CD4-positive, alpha-beta T cell (primary cell): ENCODE measurements at regions of chr1 and their contacts with region 1.

Region 1: DNA sequence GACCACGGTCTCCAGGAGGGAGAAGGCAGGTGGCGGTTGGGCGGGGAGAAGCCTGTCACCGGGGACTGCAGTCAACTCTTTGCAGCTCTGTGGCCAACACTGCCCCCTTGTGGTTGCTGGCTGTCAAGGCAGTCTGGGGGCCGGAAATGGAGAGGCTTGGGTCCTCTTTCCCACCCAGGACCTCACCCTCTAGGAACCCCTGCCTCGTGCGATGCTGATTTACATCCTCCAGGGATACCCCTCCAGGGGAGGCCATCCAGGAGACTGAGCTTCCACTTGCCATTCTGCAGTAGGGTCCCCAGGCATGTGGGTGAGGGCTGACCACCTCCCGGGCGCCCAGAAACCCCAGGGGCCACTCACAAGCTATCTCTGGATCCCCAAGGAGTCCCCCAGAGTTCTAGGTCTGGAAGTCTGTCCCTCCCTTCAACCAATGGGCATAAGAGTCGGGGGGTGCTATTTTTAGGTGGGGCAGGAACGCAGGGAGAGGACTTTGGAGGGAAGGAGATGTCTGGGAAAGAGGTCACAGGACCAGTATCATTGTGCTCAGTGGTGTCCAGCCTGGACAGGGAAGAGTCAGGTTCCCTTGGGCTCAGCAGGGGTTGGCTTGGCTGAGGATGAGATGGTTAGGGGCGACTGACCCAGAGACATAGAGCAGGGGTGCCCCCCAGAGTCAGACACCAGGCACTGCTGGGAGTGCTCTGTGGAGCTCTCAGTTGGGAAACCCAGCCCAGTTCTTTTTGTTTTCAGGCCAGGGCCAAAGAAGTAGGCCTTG is 7.1 kb upstream of the GPR61 start:
- DNase-seq: peak; percentile 83 to 95 (median 92)
- ATAC-seq: peak; percentile 92
- H3K4me3 ChIP-seq: peak overlapping the region; percentile 37
- H3K4me3 Mint-ChIP-seq: peak overlapping the region; percentile 84
- H3K27ac ChIP-seq: no peak overlapping the region
- H3K27ac Mint-ChIP-seq: peak overlapping the region; percentile 29
- H3K4me1 ChIP-seq: peaks cover 35% of the 10 kb centered on the region
- H3K4me1 Mint-ChIP-seq: peaks cover 35% of the 10 kb centered on the region
- H3K27me3 ChIP-seq: no peaks in the 10 kb centered on the region
- H3K27me3 Mint-ChIP-seq: no peaks in the 10 kb centered on the region
- CTCF ChIP-seq: peak; percentile 78

Region 2: GRCh38 chr1:109263597-109264398 is 268.8 kb before region 1 on chr1:
- CTCF ChIA-PET with region 1: interaction called, 3 read pairs
- POLR2A ChIA-PET with region 1: no interaction called
- intact Hi-C with region 1: loop called (anchors 1 kb)
- DNase-seq: peak; percentile 62 to 87 (median 71)
- ATAC-seq: peak; percentile 97
- H3K4me3 ChIP-seq: no peak overlapping the region
- H3K4me3 Mint-ChIP-seq: no peak overlapping the region
- H3K27ac ChIP-seq: no peak overlapping the region
- H3K27ac Mint-ChIP-seq: no peak overlapping the region
- H3K4me1 ChIP-seq: peaks cover 6% of the 10 kb centered on the region
- H3K4me1 Mint-ChIP-seq: no peaks in the 10 kb centered on the region
- H3K27me3 ChIP-seq: no peaks in the 10 kb centered on the region
- H3K27me3 Mint-ChIP-seq: no peaks in the 10 kb centered on the region
- CTCF ChIP-seq: peak; percentile 83

Region 3: DNA sequence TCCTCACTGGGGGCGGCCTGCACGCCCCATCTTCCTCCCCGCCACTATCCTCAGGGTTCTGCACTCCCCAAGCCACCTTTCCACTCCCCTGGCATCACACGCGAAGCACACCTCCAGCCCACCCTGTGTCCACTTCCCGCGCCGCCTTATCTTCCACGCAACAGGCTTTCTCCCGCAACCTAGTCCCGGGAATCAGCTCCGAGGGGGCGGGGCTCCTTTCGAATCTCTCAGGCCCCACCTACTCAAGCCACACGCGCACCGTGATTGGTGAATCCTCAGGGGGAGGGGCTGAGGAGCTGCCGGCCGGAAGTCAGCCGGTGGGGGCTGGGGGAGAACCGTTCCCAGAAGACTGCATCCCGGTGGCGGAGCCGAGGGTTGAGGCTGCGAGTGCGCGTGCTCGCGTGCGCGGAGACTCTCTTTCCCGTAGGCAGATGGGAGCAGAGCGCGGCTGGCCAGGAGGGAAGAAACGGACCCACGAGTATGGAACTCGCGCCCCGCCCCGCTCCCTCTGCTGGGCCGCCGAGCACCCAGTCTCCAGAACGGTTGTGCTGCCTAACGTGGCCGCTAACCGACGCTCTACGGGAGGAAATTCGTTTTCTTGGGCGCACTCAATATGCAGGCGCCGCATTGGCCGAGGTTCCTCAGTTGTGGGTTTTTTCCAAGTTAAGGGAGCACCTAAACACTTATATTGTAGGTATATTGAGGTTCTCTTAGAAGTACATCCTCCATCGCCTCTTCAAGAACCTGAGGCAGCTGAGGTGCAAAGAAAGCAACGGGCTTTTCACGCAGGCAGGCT is 249.4 kb before region 1 on chr1 and contains the start of gene PSRC1:
- CTCF ChIA-PET with region 1: interaction called, 26 read pairs
- POLR2A ChIA-PET with region 1: interaction called, 5 read pairs
- intact Hi-C with region 1: no loop called
- DNase-seq: peak; percentile 81 to 94 (median 85)
- ATAC-seq: peak; percentile 93
- H3K4me3 ChIP-seq: peak within 1 kb of the TSS; percentile 70
- H3K4me3 Mint-ChIP-seq: peak within 1 kb of the TSS; percentile 94
- H3K27ac ChIP-seq: peak within 1 kb of the TSS; percentile 31 to 59
- H3K27ac Mint-ChIP-seq: peak within 1 kb of the TSS; percentile 78
- H3K4me1 ChIP-seq: peaks cover 27% of the 10 kb centered on the region
- H3K4me1 Mint-ChIP-seq: peaks cover 19% of the 10 kb centered on the region
- H3K27me3 ChIP-seq: no peaks in the 10 kb centered on the region
- H3K27me3 Mint-ChIP-seq: no peaks in the 10 kb centered on the region
- CTCF ChIP-seq: peak; percentile 71
- total RNA-seq, gene PSRC1: 0.22 to 0.91 TPM

Region 4: DNA sequence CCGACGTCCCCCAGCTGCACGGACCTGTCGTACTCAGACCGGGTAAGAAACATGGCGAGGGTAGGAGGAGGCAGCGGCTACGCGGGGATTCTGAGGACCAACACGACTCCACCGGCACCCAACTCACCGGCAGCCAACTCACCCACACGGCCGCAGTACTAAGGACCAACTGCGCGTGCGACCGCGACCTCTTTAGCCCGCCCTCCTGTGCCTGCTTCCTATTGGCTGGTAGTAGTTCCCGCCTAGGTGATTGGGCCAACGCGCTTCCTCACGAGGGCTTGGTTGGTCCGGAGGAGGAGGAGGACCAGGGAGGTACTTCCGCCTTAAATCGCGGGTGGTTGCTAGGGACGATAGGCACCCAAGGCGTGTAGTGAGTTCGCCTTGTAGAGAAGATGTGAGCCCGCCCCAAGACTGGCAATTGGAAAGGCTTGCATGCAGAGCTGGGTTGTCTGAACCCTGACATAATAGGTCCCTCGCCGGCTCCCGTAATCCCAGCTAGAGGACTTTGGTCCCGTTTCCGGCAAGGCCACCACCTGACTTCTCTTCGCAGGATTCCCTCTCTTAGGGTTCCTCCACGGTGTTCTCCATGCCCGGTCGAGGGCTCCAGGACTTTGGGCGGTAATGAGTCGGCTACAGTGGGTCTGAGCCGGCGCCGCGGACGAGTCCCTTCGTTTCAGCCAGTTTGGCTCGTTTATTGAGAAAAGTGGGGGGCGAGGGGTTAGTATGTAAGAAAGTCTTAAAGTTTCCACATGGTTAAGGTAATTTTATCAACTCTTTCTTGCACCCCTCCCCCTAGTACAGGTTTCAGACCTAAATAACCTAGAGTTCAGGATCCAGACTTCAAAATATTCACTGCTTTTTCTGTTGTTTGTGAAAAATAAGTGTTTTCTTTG is 106.0 kb before region 1 on chr1 and contains the start of gene PSMA5:
- CTCF ChIA-PET with region 1: interaction called, 18 read pairs
- POLR2A ChIA-PET with region 1: interaction called, 17 read pairs
- intact Hi-C with region 1: loop called (anchors 2 to 5 kb)
- DNase-seq: peak; percentile 87 to 99 (median 92)
- ATAC-seq: peak; percentile 91
- H3K4me3 ChIP-seq: peak within 1 kb of the TSS; percentile 98
- H3K4me3 Mint-ChIP-seq: peak within 1 kb of the TSS; percentile 98
- H3K27ac ChIP-seq: peak within 1 kb of the TSS; percentile 91 to 95
- H3K27ac Mint-ChIP-seq: peak within 1 kb of the TSS; percentile 98
- H3K4me1 ChIP-seq: peaks cover 33% of the 10 kb centered on the region
- H3K4me1 Mint-ChIP-seq: peaks cover 52% of the 10 kb centered on the region
- H3K27me3 ChIP-seq: no peaks in the 10 kb centered on the region
- H3K27me3 Mint-ChIP-seq: no peaks in the 10 kb centered on the region
- CTCF ChIP-seq: no peak
- total RNA-seq, gene PSMA5: 29.8 to 33.8 TPM

Region 5: GRCh38 chr1:109499661-109500536 is 32.7 kb before region 1 on chr1:
- CTCF ChIA-PET with region 1: interaction called, 474 read pairs
- POLR2A ChIA-PET with region 1: interaction called, 318 read pairs
- intact Hi-C with region 1: loop called (anchors 1 kb)
- DNase-seq: peak; percentile 27 to 84 (median 67)
- ATAC-seq: peak; percentile 32
- H3K4me3 ChIP-seq: no peak overlapping the region
- H3K4me3 Mint-ChIP-seq: peak overlapping the region; percentile 54
- H3K27ac ChIP-seq: peak overlapping the region; percentile 90 to 94
- H3K27ac Mint-ChIP-seq: peak overlapping the region; percentile 95
- H3K4me1 ChIP-seq: peaks cover 99% of the 10 kb centered on the region
- H3K4me1 Mint-ChIP-seq: peaks cover 93% of the 10 kb centered on the region
- H3K27me3 ChIP-seq: no peaks in the 10 kb centered on the region
- H3K27me3 Mint-ChIP-seq: no peaks in the 10 kb centered on the region
- CTCF ChIP-seq: peak; percentile 58

Region 6: DNA sequence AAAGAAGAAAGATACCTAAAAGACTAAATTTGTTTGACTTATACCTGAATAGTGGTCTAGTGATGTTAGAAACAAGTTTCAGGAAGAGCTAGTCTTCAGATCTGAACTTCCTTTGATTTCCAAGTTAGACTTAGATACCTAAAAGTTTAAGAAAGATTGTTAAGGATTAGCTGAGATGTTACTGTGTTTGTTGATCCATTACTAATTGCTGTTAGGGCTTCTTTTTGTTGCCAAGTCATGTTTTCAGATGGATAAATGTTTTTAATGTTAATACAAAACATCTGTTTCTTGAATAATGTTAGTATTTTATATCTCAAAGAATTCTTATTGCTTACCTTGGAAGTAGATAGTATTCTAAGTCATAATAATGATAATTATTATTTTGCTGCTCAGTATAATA is 27.4 kb after region 1 on chr1:
- CTCF ChIA-PET with region 1: no interaction called
- POLR2A ChIA-PET with region 1: no interaction called
- intact Hi-C with region 1: no loop called
- DNase-seq: no peak
- ATAC-seq: no peak
- H3K4me3 ChIP-seq: no peak overlapping the region
- H3K4me3 Mint-ChIP-seq: peak overlapping the region; percentile 54
- H3K27ac ChIP-seq: no peak overlapping the region
- H3K27ac Mint-ChIP-seq: peak overlapping the region; percentile 8
- H3K4me1 ChIP-seq: peaks cover 25% of the 10 kb centered on the region
- H3K4me1 Mint-ChIP-seq: peaks cover 90% of the 10 kb centered on the region
- H3K27me3 ChIP-seq: no peaks in the 10 kb centered on the region
- H3K27me3 Mint-ChIP-seq: no peaks in the 10 kb centered on the region
- CTCF ChIP-seq: no peak